Aorta (tissue), 5 donors: ENCODE measurements at regions of chr3 and their contacts with region 1.

Region 1: GRCh38 chr3:129553719-129554118 is 10.7 kb downstream of the H1-8 start:
- DNase-seq: no peak
- ATAC-seq: no peak
- H3K4me3 ChIP-seq: no peak overlapping the region
- H3K27ac ChIP-seq: no peak overlapping the region
- H3K4me1 ChIP-seq: no peaks in the 10 kb centered on the region
- H3K27me3 ChIP-seq: no peaks in the 10 kb centered on the region

Region 2: GRCh38 chr3:129503471-129504291 is 50.0 kb before region 1 on chr3:
- intact Hi-C with region 1: loop called (anchors 2 to 5 kb)
- DNase-seq: no peak
- ATAC-seq: no peak
- H3K4me3 ChIP-seq: no peak overlapping the region
- H3K27ac ChIP-seq: no peak overlapping the region
- H3K4me1 ChIP-seq: no peaks in the 10 kb centered on the region
- H3K27me3 ChIP-seq: no peaks in the 10 kb centered on the region

Region 3: GRCh38 chr3:129824926-129825541 is 271.3 kb after region 1 on chr3:
- intact Hi-C with region 1: no loop called
- DNase-seq: no peak
- ATAC-seq: no peak
- H3K4me3 ChIP-seq: no peak overlapping the region
- H3K27ac ChIP-seq: no peak overlapping the region
- H3K4me1 ChIP-seq: no peaks in the 10 kb centered on the region
- H3K27me3 ChIP-seq: no peaks in the 10 kb centered on the region